BJ (cell line): ENCODE measurements at regions of chr15 and their contacts with region 1.

Region 1: GRCh38 chr15:59528965-59529402 is 82.6 kb upstream of the GCNT3 start:
- DNase-seq: peak; percentile 31
- H3K4me3 ChIP-seq: no peak overlapping the region
- H3K27me3 ChIP-seq: no peaks in the 10 kb centered on the region
- CTCF ChIP-seq: peak; percentile 88

Region 2: DNA sequence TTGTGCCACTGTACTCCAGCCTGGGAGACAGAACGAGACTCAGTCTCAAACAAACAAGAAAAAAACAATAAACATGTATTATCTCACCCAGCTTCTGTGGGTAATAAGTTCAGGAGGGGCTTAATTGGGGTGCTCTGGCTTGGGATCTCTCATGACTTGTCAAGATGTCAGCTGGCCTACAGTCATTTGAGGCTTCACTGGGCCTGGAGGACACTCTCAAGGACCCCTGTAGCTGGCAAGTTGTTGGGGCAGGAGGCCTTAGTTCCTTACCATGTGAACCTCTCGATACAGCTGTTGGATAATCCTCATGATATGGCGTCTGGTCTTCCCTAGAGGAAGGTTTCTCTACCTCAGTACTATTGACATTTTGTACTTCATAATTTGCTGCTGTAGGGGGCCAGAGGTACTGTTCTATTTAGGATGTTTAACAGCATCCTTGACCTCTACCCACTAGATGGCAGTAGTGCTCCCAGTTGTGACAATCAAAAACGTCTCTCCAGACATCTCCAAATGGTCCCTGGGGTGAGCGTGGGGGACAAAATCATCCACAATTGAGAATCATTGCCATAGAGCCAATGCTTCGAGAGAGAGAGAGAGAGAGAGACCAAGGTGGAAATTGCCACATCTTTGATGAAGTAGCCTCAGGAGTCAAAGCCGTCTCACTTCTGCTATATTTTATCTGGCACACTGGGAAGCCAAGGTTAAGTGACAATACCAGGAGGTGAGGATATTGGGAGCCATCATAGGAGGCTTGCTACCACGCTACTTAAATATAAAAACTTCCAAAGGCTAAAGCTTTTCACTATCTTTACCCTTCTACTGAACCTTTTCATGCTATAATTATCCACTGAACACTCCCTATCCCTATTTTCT is 571.6 kb before region 1 on chr15:
- CTCF ChIA-PET with region 1: interaction called, 14 read pairs
- POLR2A ChIA-PET with region 1: no interaction called
- DNase-seq: no peak
- H3K4me3 ChIP-seq: no peak overlapping the region
- H3K27me3 ChIP-seq: no peaks in the 10 kb centered on the region
- CTCF ChIP-seq: peak; percentile 86

Region 3: GRCh38 chr15:59492389-59493377 is 36.3 kb before region 1 on chr15:
- CTCF ChIA-PET with region 1: interaction called, 10 read pairs
- POLR2A ChIA-PET with region 1: no interaction called
- DNase-seq: no peak
- H3K4me3 ChIP-seq: no peak overlapping the region
- H3K27me3 ChIP-seq: no peaks in the 10 kb centered on the region
- CTCF ChIP-seq: peak; percentile 74

Region 4: DNA sequence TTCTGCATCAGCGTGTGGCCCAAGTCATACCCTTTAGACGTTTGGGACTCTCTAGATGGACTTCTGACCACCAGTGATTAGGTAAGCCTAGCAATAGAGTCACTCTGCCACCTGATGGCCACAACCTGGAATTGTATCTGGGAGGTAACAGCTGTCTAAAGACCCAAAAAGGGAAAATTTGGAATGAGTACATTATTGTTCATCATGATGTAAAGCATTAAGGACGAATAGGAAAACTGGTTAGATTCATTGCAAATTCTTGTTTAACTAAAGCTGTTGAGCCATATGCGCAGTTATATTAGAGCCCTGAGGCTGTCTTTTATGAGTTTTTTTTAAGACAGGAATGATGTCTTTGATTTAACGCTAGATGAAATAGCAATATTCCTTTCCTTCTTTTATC is 27.4 kb before region 1 on chr15:
- CTCF ChIA-PET with region 1: interaction called, 13 read pairs
- POLR2A ChIA-PET with region 1: no interaction called
- DNase-seq: no peak
- H3K4me3 ChIP-seq: no peak overlapping the region
- H3K27me3 ChIP-seq: no peaks in the 10 kb centered on the region
- CTCF ChIP-seq: peak; percentile 66

Region 5: DNA sequence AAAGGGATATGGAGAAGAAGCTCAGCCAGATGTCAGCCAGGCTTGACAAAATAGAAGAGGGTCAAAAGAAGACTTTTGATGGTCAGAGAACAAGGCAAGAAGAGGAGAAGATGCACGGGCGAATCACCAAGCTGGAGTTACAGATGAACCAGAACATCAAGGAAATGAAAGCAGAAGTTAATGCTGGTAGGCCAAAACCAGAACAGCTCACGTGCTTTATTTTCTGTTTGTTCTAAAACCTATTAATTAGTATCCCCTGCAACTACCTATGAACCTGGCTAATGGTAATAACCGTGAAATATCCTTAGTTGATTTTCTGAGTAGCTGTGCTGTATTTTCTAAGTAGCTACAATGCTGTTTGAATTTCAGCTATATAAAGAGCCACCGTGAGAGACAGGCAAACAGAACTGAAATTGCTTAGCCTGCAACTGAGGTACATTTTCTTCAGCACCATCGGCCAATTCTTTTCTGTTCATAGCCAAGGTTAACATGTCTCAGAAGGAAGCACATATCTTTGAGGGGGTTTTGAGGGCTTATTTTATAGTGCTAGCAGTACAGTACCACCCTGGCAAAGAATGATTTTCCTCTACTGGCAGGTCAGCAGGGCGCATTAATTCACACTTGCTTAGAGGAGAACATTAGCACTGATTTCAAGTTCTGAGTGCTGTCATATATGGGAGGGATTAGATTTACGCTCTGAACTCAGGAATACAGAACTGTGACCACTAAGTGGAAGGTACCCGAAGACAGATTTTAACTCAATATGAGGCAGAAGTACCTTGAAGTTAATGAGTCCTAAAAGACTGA is 12.1 kb before region 1 on chr15:
- CTCF ChIA-PET with region 1: interaction called, 40 read pairs
- POLR2A ChIA-PET with region 1: interaction called, 3 read pairs
- DNase-seq: no peak
- H3K4me3 ChIP-seq: no peak overlapping the region
- H3K27me3 ChIP-seq: 0 out of 2 replicates have a peak, but pooled peaks cover 2% of the 10 kb centered on the region
- CTCF ChIP-seq: no peak

Region 6: DNA sequence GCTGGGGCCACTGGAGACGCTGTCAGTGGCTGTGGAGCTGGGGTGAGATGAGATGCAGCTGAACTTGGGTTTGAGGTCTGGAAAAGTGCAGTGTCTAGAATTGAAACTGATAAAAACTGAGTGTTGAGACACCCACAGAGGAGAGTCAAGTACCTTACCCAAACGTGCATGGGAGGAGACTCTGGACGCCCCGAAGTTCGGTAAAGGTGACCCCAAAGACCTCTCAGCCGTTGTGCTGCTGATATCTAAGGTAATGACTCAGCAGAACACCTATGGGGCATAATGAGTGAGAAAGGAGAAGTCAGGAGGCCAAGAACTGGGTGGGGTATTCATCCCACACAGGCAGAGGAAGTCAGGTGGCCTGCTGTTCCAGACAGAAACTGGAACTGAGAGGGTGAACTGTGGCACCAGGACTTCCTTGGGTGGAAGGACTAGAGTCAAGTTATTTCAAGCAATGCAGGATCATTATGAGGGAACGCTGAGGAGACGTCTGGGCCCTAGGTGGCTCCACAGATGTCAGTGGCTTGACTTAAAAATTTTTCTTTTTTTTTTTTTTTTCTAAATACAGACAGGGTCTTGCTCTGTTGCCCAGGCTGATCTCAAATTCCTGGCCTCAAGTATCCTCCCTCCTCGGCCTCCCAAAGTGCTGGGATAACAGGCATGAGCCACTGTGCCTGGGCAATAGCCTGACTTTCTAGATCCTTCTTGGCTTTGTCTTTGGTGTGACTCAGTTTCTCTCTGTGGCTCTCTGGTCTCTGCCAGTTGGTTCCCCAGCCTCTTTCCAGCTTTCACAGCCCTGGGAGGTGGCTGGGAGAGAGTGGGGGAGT is 14.9 kb after region 1 on chr15:
- CTCF ChIA-PET with region 1: interaction called, 17 read pairs
- POLR2A ChIA-PET with region 1: no interaction called
- DNase-seq: no peak
- H3K4me3 ChIP-seq: no peak overlapping the region
- H3K27me3 ChIP-seq: peaks cover 2% of the 10 kb centered on the region; the same call in 1 of the 2 replicates
- CTCF ChIP-seq: no peak

Region 7: DNA sequence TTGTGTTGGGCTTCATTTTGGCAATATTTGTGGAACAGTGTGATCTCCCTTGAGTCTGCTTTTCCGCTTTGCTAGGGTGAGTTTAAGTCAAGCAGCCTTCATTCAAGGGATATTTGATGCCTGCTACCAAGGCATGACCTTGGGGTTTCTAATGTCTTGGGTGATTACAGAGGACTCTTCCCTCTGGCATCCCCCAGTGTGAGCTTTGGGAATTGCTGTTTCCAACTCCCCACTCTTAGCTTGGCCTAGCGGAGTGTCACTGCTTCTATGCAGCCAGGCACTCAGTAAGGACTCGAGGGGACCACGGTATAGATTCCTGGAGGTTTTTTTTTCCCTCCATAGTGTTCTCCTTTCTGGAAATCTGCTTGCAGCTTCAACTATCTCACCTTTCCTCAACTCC is 103.7 kb after region 1 on chr15:
- CTCF ChIA-PET with region 1: interaction called, 14 read pairs
- POLR2A ChIA-PET with region 1: no interaction called
- DNase-seq: no peak
- H3K4me3 ChIP-seq: no peak overlapping the region
- H3K27me3 ChIP-seq: no peaks in the 10 kb centered on the region
- CTCF ChIP-seq: peak; percentile 26; the same call in 1 of the 2 replicates

Region 8: DNA sequence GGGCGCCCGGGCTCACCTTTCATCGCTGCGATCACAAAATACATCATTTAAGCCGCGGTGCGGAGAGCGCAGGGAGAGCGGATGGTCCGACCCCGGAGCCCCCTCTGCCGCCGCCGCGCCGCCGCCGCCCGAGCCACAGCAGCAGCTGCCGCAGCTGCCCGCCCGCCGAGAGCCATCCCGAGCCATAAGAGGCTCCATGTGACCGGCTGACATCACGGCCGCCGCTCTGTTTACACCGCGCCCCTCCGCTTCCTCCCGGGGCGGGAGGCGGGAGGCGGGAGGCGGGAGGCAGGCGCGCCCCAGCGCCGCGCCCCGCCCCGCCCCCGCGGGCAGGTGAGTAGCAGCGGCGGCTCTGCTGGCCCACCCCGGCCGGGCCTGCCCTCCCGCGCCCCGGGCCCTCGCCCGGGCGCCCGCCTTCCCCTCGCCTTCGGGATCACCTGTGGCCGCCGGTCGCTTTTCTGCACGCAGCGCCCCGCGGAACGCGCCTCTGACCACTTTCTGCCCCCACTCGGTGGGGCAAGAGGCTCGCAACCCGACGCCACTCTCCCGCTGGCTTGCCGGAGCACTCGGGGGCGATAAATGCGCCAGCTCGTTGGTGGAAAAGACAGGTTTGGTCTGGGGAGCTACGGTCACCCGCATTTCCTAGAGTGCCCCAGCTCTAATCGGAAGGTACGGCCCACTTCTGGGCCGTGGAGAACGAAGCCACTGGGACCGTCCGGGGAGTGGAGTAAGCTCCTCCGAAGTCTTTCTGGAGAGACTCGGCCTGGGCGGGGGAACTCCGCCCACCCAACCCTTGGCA is 1063.6 kb after region 1 on chr15:
- CTCF ChIA-PET with region 1: no interaction called
- POLR2A ChIA-PET with region 1: no interaction called
- DNase-seq: no peak
- H3K4me3 ChIP-seq: peak overlapping the region; percentile 66
- H3K27me3 ChIP-seq: peaks cover 16% of the 10 kb centered on the region
- CTCF ChIP-seq: peak; percentile 18; the same call in 1 of the 2 replicates